SK-MEL-5 (cell line): ENCODE measurements at regions of chr5 and their contacts with region 1.

Region 1: DNA sequence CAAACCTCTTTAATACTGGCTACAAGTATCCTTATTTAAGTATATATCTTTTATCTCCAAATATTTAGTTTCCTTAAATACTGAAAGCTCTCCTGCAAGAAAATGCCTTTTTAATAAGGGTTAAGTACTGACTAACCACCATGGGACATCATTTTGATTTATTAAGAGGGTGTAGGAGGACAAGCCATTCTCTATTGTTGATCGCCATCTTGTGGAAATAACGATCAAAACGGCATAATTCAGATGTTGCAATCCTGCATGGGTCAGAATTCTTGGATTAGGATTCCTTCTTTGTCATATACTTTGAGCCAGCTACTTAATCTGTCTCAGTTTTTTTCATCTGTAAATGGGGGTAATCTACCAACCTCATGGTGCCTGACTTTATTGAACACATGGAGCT is 28.7 kb upstream of the C5orf46 start:
- DNase-seq: peak; percentile 79

Region 2: GRCh38 chr5:147887024-147887627 is 47.9 kb before region 1 on chr5:
- in situ Hi-C with region 1: loop called (anchors 10 kb)
- DNase-seq: peak; percentile 67